Activated B cell treated with CpG ODN at 0.5 μM for 24 hours (primary cell): ENCODE measurements at regions of chr9 and their contacts with region 1.

Region 1: GRCh38 chr9:108565651-108566378 is 290.0 kb downstream of the ACTL7B start:
- DNase-seq: no peak
- ATAC-seq: no peak
- H3K4me3 Mint-ChIP-seq: no peak overlapping the region
- H3K27ac Mint-ChIP-seq: no peak overlapping the region
- H3K4me1 Mint-ChIP-seq: no peaks in the 10 kb centered on the region
- H3K27me3 Mint-ChIP-seq: peaks cover 6% of the 10 kb centered on the region
- CTCF ChIP-seq: no peak

Region 2: DNA sequence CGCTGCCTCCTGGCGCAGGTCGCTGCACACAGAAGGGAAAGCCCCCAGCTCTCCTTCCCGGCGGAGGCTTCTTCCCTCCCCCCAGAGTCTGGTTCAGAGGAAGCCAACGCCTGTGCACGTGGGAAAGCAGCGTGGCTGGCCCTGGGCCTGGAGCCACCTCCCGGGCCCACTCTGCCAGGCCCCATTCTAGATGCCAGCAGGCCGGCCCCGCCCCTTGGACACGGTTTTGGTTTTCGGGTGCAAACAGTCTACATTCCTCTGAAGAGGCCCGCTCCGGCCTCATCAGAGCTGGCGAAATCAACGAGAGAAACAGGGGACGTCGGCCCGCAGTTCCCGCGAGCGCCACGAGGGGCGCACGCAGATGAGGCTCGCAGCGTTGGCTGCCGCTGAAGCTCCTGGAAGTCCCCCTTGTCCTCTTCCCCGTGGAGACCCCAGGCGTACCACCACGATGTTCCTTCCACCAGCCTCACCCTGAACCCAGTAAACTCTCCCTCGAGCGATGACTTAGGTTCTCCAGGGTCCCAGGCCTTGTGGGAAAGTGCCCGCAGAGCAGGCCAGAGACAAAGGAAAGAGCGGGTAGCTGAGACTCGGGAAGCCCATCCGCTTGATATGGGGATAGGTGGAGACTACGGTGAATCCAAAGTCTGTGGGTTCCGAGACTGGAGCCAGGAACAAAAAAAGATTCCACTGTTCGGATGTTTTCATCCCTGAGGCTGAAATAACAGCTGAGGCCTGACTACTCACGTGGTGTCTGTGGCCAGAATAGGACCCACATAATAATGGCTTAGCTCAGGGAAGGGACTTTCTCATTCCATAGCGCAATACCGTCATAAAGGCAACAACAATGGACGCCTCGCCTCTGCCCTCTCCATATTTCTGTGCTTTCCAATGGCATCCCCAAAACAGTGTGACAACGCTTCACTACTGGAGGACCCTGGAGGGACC is 1140.4 kb before region 1 on chr9:
- CTCF ChIA-PET with region 1: interaction called, 13 read pairs
- POLR2A ChIA-PET with region 1: no interaction called
- intact Hi-C with region 1: loop called (anchors 1 kb)
- DNase-seq: peak; percentile 46
- ATAC-seq: peak; percentile 78
- H3K4me3 Mint-ChIP-seq: peak overlapping the region; percentile 48
- H3K27ac Mint-ChIP-seq: no peak overlapping the region
- H3K4me1 Mint-ChIP-seq: peaks cover 3% of the 10 kb centered on the region
- H3K27me3 Mint-ChIP-seq: peaks cover 15% of the 10 kb centered on the region
- CTCF ChIP-seq: peak; percentile 59

Region 3: GRCh38 chr9:107465467-107466451 is 1100.1 kb before region 1 on chr9:
- CTCF ChIA-PET with region 1: interaction called, 33 read pairs
- POLR2A ChIA-PET with region 1: interaction called, 3 read pairs
- intact Hi-C with region 1: loop called (anchors 1 kb)
- DNase-seq: peak; percentile 50
- ATAC-seq: peak; percentile 90
- H3K4me3 Mint-ChIP-seq: peak overlapping the region; percentile 67
- H3K27ac Mint-ChIP-seq: no peak overlapping the region
- H3K4me1 Mint-ChIP-seq: peaks cover 8% of the 10 kb centered on the region
- H3K27me3 Mint-ChIP-seq: peaks cover 30% of the 10 kb centered on the region
- CTCF ChIP-seq: no peak

Region 4: GRCh38 chr9:107484117-107484723 is 1081.6 kb before region 1 on chr9:
- CTCF ChIA-PET with region 1: interaction called, 25 read pairs
- POLR2A ChIA-PET with region 1: no interaction called
- intact Hi-C with region 1: no loop called
- DNase-seq: no peak
- ATAC-seq: peak; percentile 45
- H3K4me3 Mint-ChIP-seq: no peak overlapping the region
- H3K27ac Mint-ChIP-seq: no peak overlapping the region
- H3K4me1 Mint-ChIP-seq: peaks cover 10% of the 10 kb centered on the region
- H3K27me3 Mint-ChIP-seq: peaks cover 20% of the 10 kb centered on the region
- CTCF ChIP-seq: no peak

Region 5: DNA sequence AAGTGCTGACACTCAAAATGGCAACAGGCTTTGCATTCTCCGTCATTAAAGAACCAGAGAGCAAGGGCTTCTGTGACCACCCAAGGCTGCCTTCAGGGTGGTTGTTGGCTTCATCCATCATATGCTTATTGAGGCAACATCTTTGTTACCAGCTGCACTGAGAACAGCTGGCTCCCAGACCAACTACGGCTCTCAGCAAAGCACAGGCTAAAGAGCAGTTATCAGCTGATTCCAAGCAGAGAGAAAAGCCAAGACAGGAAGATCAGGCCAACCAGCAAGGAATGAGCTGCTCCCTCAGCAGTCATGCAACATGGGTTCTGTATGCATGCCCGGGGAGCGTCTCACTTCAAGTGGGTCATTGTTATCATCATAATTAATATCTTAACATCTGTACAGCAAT is 69.0 kb before region 1 on chr9:
- CTCF ChIA-PET with region 1: no interaction called
- POLR2A ChIA-PET with region 1: no interaction called
- intact Hi-C with region 1: no loop called
- DNase-seq: no peak
- ATAC-seq: no peak
- H3K4me3 Mint-ChIP-seq: no peak overlapping the region
- H3K27ac Mint-ChIP-seq: no peak overlapping the region
- H3K4me1 Mint-ChIP-seq: no peaks in the 10 kb centered on the region
- H3K27me3 Mint-ChIP-seq: no peaks in the 10 kb centered on the region
- CTCF ChIP-seq: no peak

Region 6: GRCh38 chr9:108645520-108645919 is 79.7 kb after region 1 on chr9:
- CTCF ChIA-PET with region 1: no interaction called
- POLR2A ChIA-PET with region 1: no interaction called
- intact Hi-C with region 1: no loop called
- DNase-seq: no peak
- ATAC-seq: no peak
- H3K4me3 Mint-ChIP-seq: no peak overlapping the region
- H3K27ac Mint-ChIP-seq: no peak overlapping the region
- H3K4me1 Mint-ChIP-seq: no peaks in the 10 kb centered on the region
- H3K27me3 Mint-ChIP-seq: no peaks in the 10 kb centered on the region
- CTCF ChIP-seq: no peak

Region 7: GRCh38 chr9:110486218-110486617 is 1920.4 kb after region 1 on chr9:
- CTCF ChIA-PET with region 1: no interaction called
- POLR2A ChIA-PET with region 1: no interaction called
- intact Hi-C with region 1: no loop called
- DNase-seq: no peak
- ATAC-seq: no peak
- H3K4me3 Mint-ChIP-seq: no peak overlapping the region
- H3K27ac Mint-ChIP-seq: no peak overlapping the region
- H3K4me1 Mint-ChIP-seq: no peaks in the 10 kb centered on the region
- H3K27me3 Mint-ChIP-seq: no peaks in the 10 kb centered on the region
- CTCF ChIP-seq: no peak